BJ (cell line): ENCODE measurements at regions of chr18 and their contacts with region 1.

Region 1: DNA sequence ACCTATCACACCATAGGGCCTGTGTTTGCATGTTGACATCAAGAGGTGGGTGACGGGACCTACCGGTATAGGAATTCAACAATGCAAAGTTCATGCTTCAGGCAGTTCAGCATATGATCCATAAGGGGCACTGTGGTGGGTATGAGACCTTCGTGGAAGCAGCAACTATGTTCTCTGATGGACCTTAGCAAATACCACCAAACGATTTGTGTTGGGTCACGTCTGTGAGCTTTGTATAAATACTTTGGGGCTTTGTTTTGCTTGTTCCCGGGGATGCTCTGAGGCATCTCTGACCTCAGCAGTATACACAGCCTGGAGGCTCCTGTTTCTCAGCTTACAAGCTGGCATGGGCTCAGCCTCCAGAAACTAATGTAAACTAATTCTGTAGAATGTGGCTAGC is 111.7 kb downstream of the DTNA start:
- DNase-seq: no peak
- H3K4me3 ChIP-seq: no peak overlapping the region
- H3K27me3 ChIP-seq: no peaks in the 10 kb centered on the region; the same call in 1 of the 2 replicates
- CTCF ChIP-seq: no peak

Region 2: GRCh38 chr18:34809451-34810072 is 12.2 kb before region 1 on chr18:
- CTCF ChIA-PET with region 1: interaction called, 13 read pairs
- POLR2A ChIA-PET with region 1: no interaction called
- DNase-seq: no peak
- H3K4me3 ChIP-seq: no peak overlapping the region
- H3K27me3 ChIP-seq: no peaks in the 10 kb centered on the region; the same call in 1 of the 2 replicates
- CTCF ChIP-seq: peak; percentile 62